Heart right ventricle (tissue), 16 donors: ENCODE measurements at regions of chr4 and their contacts with region 1.

Region 1: GRCh38 chr4:87353592-87353991 is 30.9 kb upstream of the HSD17B13 start:
- DNase-seq: peak; percentile 27 to 63
- ATAC-seq: peak in 6 of 8 donors; percentile 61 to 93 (median 76)
- H3K4me3 ChIP-seq: no peak overlapping the region
- H3K27ac ChIP-seq: peak overlapping the region in 7 of 10 donors; percentile 14 to 75 (median 47)
- H3K4me1 ChIP-seq: peaks cover 0 to 19% (median 6%) of the 10 kb centered on the region in 9 donors
- H3K27me3 ChIP-seq: no peaks in the 10 kb centered on the region
- CTCF ChIP-seq: peak; percentile 46 to 82 (median 66)

Region 2: DNA sequence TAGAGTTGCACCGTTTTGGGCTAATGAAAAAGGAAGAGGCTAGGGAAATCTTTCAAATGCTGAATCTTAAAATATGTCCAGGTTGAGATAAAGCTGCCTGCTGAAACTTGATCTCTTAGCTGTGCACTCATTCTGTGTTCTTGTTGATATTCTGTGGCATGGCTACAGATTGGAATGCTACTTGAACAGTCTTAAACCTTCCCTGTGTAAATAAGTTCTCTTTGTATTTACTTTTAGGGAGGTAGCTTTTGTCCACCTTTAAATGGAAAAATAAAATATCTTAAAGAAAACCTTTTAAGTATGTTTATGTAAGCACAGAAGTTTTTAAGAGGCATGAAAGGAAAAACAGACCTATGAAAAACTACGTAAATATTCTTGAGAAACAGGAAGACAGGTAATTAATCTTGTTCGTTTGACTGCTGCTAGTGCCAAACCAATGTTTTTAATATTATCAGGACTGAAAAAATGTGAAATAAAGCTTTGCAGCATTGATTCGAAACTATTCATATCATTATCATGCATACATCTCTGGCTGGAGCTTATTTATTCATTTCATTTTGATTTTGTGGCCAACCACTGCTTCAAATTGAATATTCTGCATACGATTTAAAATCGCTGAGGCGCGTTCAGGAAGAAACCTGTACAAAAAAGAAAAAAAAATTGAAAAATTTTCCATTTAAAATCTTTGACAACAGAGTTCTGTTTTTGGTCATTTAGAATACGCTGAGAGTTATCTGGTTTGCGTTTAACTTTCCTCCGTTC is 48.7 kb before region 1 on chr4:
- intact Hi-C with region 1: no loop called
- DNase-seq: no peak
- ATAC-seq: no peak
- H3K4me3 ChIP-seq: no peak overlapping the region
- H3K27ac ChIP-seq: no peak overlapping the region
- H3K4me1 ChIP-seq: peaks cover 0 to 8% (median 3%) of the 10 kb centered on the region in 9 donors
- H3K27me3 ChIP-seq: no peaks in the 10 kb centered on the region
- CTCF ChIP-seq: no peak

Region 3: GRCh38 chr4:87530868-87531267 is 177.3 kb after region 1 on chr4:
- intact Hi-C with region 1: loop called in 1 of 10 experiments (anchors 5 kb)
- DNase-seq: peak; percentile 35 to 87
- ATAC-seq: peak; percentile 55 to 96 (median 88)
- H3K4me3 ChIP-seq: peak overlapping the region in 8 of 10 donors; percentile 48 to 68 (median 60)
- H3K27ac ChIP-seq: peak overlapping the region; percentile 72 to 93 (median 87)
- H3K4me1 ChIP-seq: peaks cover 3 to 46% (median 29%) of the 10 kb centered on the region in 9 donors
- H3K27me3 ChIP-seq: no peaks in the 10 kb centered on the region
- CTCF ChIP-seq: no peak